Activated B cell treated with CpG ODN at 0.5 μM for 24 hours (primary cell): ENCODE measurements at regions of chr2 and their contacts with region 1.

Region 1: DNA sequence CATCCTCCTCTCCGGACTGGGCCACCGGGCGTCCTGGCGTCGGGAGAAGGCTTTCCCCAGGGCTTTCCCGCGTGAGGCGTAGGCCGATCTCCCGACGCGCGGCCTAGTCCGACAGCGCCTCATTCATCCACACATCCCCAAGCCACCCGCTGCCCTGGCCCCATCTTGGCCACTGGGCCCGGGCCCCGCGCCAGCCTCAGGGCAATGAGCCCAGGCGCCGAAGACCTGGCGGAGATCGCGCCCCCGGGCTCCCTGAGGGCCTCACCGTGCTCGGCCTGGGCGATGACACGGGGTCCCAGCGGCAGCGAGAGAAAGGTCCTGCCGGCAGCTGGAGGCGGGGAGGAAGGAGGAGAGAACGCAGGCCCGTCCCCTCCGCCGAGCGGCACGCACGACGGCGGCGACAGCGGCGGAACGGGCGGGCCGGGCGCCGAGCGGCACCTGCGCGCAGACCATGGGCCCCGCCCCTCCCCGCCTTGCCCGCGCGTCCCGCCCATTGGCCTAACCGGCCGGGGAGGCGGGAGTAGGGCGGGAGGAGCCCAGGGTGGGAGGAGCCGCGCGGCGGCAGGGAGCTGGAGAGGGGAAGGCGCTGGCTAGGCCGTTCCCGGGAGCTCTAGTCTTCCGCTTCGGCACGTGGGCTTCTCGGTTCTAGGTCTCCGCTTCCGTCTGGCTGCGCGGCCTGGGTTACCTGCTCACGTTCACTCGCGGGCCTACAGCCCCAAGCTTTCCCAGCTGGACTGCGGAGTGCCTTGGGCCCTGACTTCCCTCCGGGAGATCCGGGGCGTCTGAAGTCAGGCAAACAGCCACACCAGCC is at the start of gene OLA1:
- DNase-seq: peak; percentile 99
- ATAC-seq: peak; percentile 97
- H3K4me3 Mint-ChIP-seq: peak within 1 kb of the TSS; percentile 88
- H3K27ac Mint-ChIP-seq: peak within 1 kb of the TSS; percentile 86
- H3K4me1 Mint-ChIP-seq: peaks cover 27% of the 10 kb centered on the region
- H3K27me3 Mint-ChIP-seq: no peaks in the 10 kb centered on the region
- CTCF ChIP-seq: no peak
- total RNA-seq, gene OLA1: 74.4 and 86.6 TPM in 2 replicates

Region 2: DNA sequence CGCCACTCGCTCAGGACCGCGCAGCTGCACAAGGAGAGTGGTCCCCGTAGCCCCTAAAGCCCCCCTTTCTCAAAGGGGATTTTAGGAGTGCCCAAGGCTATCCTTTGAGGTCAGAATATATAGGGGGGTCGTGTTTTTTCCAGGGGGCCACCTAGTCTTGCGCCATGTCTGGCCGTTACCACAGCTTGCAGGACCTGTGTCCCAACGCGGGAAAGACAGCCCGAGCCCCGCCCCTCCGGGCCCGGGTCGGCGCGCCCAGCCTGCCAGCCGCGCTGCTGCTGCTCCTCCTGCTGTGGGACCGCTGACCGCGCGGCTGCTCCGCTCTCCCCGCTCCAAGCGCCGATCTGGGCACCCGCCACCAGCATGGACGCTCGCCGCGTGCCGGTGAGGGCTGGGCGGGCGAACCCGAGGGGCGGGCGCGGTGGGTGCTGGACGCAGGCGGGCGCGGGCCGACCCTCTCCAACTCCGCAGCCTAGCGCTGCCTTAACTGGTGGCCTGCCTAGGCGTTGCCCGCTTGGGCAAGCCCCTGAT is 893.7 kb before region 1 on chr2 and contains the start of gene CDCA7:
- CTCF ChIA-PET with region 1: no interaction called
- POLR2A ChIA-PET with region 1: no interaction called
- intact Hi-C with region 1: loop called (anchors 5 kb)
- DNase-seq: peak; percentile 49
- ATAC-seq: peak; percentile 72
- H3K4me3 Mint-ChIP-seq: peak within 1 kb of the TSS; percentile 87
- H3K27ac Mint-ChIP-seq: no peak within 1 kb of the TSS
- H3K4me1 Mint-ChIP-seq: peaks cover 29% of the 10 kb centered on the region
- H3K27me3 Mint-ChIP-seq: peaks cover 22% of the 10 kb centered on the region
- CTCF ChIP-seq: no peak
- total RNA-seq, gene CDCA7: 4.9 and 6.3 TPM in 2 replicates

Region 3: DNA sequence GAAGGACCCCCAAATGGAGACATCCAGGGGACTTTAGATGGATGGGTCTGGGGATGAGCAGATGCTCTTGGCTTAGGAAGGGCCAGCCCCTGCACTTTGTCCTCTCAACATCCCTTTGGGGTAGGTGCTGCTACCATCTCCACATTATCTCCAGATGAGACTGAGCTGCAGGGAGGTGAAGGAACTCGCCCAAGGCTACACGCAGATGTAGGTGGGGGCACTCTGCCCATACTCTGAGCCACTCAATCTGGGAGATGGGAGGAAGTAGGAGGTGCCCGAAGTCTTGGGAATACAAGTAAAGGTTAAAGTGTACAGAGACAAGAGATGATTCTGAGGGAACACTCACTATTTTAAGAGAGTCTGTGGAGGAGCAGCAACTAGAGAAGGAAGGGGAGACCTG is 214.3 kb before region 1 on chr2:
- CTCF ChIA-PET with region 1: no interaction called
- POLR2A ChIA-PET with region 1: no interaction called
- intact Hi-C with region 1: loop called (anchors 5 kb)
- DNase-seq: no peak
- ATAC-seq: no peak
- H3K4me3 Mint-ChIP-seq: no peak overlapping the region
- H3K27ac Mint-ChIP-seq: no peak overlapping the region
- H3K4me1 Mint-ChIP-seq: peaks cover 37% of the 10 kb centered on the region
- H3K27me3 Mint-ChIP-seq: peaks cover 3% of the 10 kb centered on the region
- CTCF ChIP-seq: no peak

Region 4: GRCh38 chr2:174217869-174218268 is 30.5 kb before region 1 on chr2:
- CTCF ChIA-PET with region 1: no interaction called
- POLR2A ChIA-PET with region 1: no interaction called
- intact Hi-C with region 1: no loop called
- DNase-seq: no peak
- ATAC-seq: no peak
- H3K4me3 Mint-ChIP-seq: no peak overlapping the region
- H3K27ac Mint-ChIP-seq: no peak overlapping the region
- H3K4me1 Mint-ChIP-seq: no peaks in the 10 kb centered on the region
- H3K27me3 Mint-ChIP-seq: no peaks in the 10 kb centered on the region
- CTCF ChIP-seq: no peak

Region 5: DNA sequence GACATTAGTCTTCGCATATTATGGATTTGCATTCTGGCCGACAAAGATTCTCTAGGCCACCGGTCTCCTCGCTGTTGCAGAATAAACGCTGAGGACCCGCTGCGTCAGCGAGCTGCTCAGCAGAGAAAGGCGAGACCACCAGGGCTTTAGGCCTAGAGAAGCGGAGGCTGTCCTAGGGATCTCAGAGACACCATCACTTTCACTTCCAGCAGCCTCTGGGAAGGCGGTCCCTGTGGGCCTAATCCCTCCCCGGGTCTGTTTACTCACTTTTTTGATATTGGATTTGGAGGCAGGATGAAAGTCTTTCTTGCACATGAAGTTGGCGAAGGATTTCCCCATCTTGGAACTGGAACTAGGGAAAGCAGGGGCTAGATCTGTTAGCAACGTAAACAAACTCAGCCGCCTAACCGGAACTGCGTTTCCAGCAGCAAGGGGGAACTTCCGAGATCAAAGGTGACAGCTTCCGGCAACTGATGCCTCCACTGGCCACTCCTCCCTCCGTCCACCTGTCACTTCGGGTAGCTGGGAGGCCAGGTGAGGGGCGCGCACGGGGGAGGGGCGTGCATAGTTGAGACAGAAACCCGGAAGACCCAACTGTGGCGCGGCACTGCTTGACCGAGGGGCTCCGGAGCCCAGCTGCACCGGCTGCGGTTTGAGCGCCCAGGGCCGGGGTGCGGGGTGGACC is 147.0 kb after region 1 on chr2 and contains the start of gene SCRN3:
- CTCF ChIA-PET with region 1: no interaction called
- POLR2A ChIA-PET with region 1: interaction called, 4 read pairs
- intact Hi-C with region 1: loop called (anchors 5 kb)
- DNase-seq: peak; percentile 59
- ATAC-seq: peak; percentile 94
- H3K4me3 Mint-ChIP-seq: peak within 1 kb of the TSS; percentile 100
- H3K27ac Mint-ChIP-seq: peak within 1 kb of the TSS; percentile 98
- H3K4me1 Mint-ChIP-seq: peaks cover 34% of the 10 kb centered on the region
- H3K27me3 Mint-ChIP-seq: no peaks in the 10 kb centered on the region
- CTCF ChIP-seq: no peak
- total RNA-seq, gene SCRN3: 14.3 and 19.4 TPM in 2 replicates

Region 6: GRCh38 chr2:175167792-175168563 is 919.6 kb after region 1 on chr2 and contains the start of gene ATF2:
- CTCF ChIA-PET with region 1: no interaction called
- POLR2A ChIA-PET with region 1: no interaction called
- intact Hi-C with region 1: loop called (anchors 2 kb)
- DNase-seq: peak; percentile 87
- ATAC-seq: peak; percentile 92
- H3K4me3 Mint-ChIP-seq: peak within 1 kb of the TSS; percentile 100
- H3K27ac Mint-ChIP-seq: peak within 1 kb of the TSS; percentile 99
- H3K4me1 Mint-ChIP-seq: peaks cover 43% of the 10 kb centered on the region
- H3K27me3 Mint-ChIP-seq: no peaks in the 10 kb centered on the region
- CTCF ChIP-seq: no peak
- total RNA-seq, gene ATF2: 49.0 and 59.9 TPM in 2 replicates